ENCODE measurements at regions of chr12 and their contacts with region 1.

Region 1: GRCh38 chr12:17352164-17352563 is 737.8 kb downstream of the RERGL start:
- DNase-seq: no peak
- ATAC-seq: no peak
- H3K4me3 ChIP-seq: no peak overlapping the region
- H3K4me3 Mint-ChIP-seq: no peak overlapping the region
- H3K27ac ChIP-seq: no peak overlapping the region
- H3K27ac Mint-ChIP-seq: no peak overlapping the region
- H3K4me1 ChIP-seq: no peaks in the 10 kb centered on the region
- H3K4me1 Mint-ChIP-seq: no peaks in the 10 kb centered on the region
- H3K27me3 ChIP-seq: no peaks in the 10 kb centered on the region
- H3K27me3 Mint-ChIP-seq: no peaks in the 10 kb centered on the region
- CTCF ChIP-seq: no peak

Region 2: GRCh38 chr12:17334784-17335183 is 17.4 kb before region 1 on chr12:
- CTCF ChIA-PET with region 1: no interaction called
- POLR2A ChIA-PET with region 1: no interaction called
- intact Hi-C with region 1: loop called in 1 of 2 experiments (anchors 1 kb)
- DNase-seq: no peak
- ATAC-seq: no peak
- H3K4me3 ChIP-seq: no peak overlapping the region
- H3K4me3 Mint-ChIP-seq: no peak overlapping the region
- H3K27ac ChIP-seq: no peak overlapping the region
- H3K27ac Mint-ChIP-seq: no peak overlapping the region
- H3K4me1 ChIP-seq: no peaks in the 10 kb centered on the region
- H3K4me1 Mint-ChIP-seq: no peaks in the 10 kb centered on the region
- H3K27me3 ChIP-seq: no peaks in the 10 kb centered on the region
- H3K27me3 Mint-ChIP-seq: no peaks in the 10 kb centered on the region
- CTCF ChIP-seq: no peak

Measured in CD8-positive, alpha-beta T cell (primary cell).